ENCODE measurements at regions of chr7 and their contacts with region 1.

Region 1: GRCh38 chr7:94289071-94289470 is 105.6 kb upstream of the COL1A2 start:
- DNase-seq: peak; percentile 64
- H3K4me3 Mint-ChIP-seq: no peak overlapping the region
- H3K27ac Mint-ChIP-seq: no peak overlapping the region
- H3K4me1 Mint-ChIP-seq: no peaks in the 10 kb centered on the region
- H3K27me3 Mint-ChIP-seq: no peaks in the 10 kb centered on the region
- CTCF ChIP-seq: peak; percentile 62

Region 2: DNA sequence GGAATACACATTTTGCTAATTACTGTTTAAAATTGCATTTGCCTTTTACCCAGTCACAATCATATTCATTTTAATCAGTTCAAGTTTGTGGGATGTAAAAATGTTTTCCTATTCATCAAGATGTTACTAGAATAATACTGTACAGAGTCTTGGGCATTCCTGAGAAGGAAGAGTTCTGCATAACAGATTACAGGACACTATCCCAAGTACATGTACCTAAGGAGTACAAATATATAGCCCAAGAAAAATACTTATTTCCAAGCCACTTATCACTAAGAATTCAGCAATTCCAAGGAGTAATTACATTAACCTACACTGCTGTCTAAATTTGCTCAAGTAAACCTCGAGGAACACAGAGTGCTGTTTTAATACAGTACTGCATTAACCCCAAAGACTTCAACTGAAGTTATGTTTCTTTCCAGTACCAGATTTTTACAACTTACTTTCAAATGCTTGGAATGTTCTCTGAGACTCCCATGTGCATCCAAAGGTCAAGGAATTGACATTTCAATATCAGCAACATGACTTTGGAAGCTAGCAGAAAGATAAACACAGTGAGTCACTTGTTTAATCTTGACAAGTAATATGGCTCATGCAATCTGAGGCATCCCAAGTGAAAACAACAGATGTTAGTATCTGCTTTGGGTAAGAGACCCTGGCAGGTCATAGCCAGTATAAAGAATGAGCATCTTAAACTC is 159.5 kb before region 1 on chr7:
- CTCF ChIA-PET with region 1: no interaction called
- intact Hi-C with region 1: no loop called
- DNase-seq: no peak
- H3K4me3 Mint-ChIP-seq: no peak overlapping the region
- H3K27ac Mint-ChIP-seq: no peak overlapping the region
- H3K4me1 Mint-ChIP-seq: peaks cover 8% of the 10 kb centered on the region
- H3K27me3 Mint-ChIP-seq: no peaks in the 10 kb centered on the region
- CTCF ChIP-seq: no peak

Region 3: GRCh38 chr7:94338921-94339371 is 49.9 kb after region 1 on chr7:
- CTCF ChIA-PET with region 1: no interaction called
- intact Hi-C with region 1: no loop called
- DNase-seq: no peak
- H3K4me3 Mint-ChIP-seq: no peak overlapping the region
- H3K27ac Mint-ChIP-seq: no peak overlapping the region
- H3K4me1 Mint-ChIP-seq: no peaks in the 10 kb centered on the region
- H3K27me3 Mint-ChIP-seq: no peaks in the 10 kb centered on the region
- CTCF ChIP-seq: no peak

Region 4: DNA sequence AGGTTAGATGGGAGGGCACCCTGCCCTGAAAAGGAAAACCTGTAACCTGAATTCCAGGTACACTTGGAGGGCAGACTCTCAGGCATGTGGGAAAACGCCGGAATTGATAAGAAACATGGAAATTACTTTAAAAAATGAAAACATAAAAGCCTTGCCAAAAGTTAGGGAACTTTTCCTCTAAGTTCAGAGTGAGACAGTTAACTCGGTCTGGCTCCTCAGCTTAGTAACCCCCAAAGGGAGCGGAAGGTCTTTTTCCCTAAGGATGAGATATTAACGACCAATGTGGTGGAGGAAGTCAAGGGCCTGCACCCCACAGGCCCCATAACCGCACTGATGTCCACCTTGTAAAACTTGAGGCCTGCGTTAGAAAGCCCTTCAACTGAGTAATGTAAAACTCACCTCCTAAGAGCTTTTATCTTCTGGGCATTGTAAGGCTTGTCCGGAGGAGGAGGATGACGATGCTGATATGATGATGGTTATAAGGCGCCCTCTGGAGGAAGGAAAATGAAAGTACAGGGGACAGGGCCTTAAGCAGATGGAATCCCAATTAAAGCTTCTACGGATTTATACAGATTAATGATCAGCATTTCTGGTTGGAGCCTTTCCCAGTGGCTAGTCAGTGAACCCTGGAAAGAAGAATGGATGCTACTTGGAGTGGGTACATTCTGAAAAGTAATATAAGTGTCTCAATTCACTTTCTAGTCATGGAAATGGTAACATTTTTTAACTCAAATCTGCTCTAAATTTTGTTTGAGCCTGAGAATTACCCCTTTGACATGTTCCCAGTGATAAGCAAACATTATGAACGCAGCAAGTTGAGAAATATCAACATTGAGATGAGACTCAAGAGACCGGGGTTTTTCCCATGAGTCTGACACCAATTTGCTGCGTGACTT is 106.3 kb after region 1 on chr7:
- CTCF ChIA-PET with region 1: interaction called, 31 read pairs
- intact Hi-C with region 1: loop called (anchors 1 kb)
- DNase-seq: peak; percentile 41
- H3K4me3 Mint-ChIP-seq: no peak overlapping the region
- H3K27ac Mint-ChIP-seq: no peak overlapping the region
- H3K4me1 Mint-ChIP-seq: no peaks in the 10 kb centered on the region
- H3K27me3 Mint-ChIP-seq: no peaks in the 10 kb centered on the region
- CTCF ChIP-seq: no peak

Region 5: DNA sequence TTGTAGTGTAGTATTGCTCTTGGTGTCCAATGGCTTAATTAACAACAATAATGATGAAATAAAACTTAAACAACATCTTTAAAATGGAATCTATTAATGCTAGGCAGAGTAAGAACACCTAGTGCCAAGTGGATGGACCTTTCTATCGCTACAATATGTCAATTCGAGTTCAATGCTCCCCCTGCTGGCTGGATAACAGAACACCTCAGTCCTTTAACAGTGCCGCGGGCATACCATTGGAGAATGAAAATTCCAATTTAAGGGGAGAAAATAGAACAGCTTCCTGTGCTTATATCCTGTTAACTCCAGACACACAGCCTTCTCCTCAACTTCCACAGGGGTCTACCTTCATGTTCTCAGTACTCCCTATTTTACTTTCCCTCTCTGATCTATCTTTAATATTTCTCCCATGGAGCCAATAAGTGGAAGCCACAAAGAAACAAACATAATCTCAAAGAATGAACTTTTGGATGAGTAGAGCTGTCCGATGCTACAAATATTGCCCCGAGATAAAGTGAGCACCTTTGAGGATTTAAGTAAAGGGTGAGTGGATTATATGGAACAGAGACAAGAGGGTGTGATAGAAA is 147.0 kb after region 1 on chr7:
- CTCF ChIA-PET with region 1: interaction called, 5 read pairs
- intact Hi-C with region 1: loop called (anchors 1 kb)
- DNase-seq: peak; percentile 66
- H3K4me3 Mint-ChIP-seq: no peak overlapping the region
- H3K27ac Mint-ChIP-seq: no peak overlapping the region
- H3K4me1 Mint-ChIP-seq: no peaks in the 10 kb centered on the region
- H3K27me3 Mint-ChIP-seq: no peaks in the 10 kb centered on the region
- CTCF ChIP-seq: peak; percentile 70

Region 6: GRCh38 chr7:95045236-95045923 is 756.3 kb after region 1 on chr7:
- CTCF ChIA-PET with region 1: no interaction called
- intact Hi-C with region 1: loop called (anchors 5 kb)
- DNase-seq: peak; percentile 51
- H3K4me3 Mint-ChIP-seq: no peak overlapping the region
- H3K27ac Mint-ChIP-seq: no peak overlapping the region
- H3K4me1 Mint-ChIP-seq: no peaks in the 10 kb centered on the region
- H3K27me3 Mint-ChIP-seq: no peaks in the 10 kb centered on the region
- CTCF ChIP-seq: peak; percentile 31

Region 7: GRCh38 chr7:95246831-95247370 is 957.8 kb after region 1 on chr7:
- CTCF ChIA-PET with region 1: interaction called, 3 read pairs
- intact Hi-C with region 1: loop called (anchors 10 kb)
- DNase-seq: peak; percentile 43
- H3K4me3 Mint-ChIP-seq: no peak overlapping the region
- H3K27ac Mint-ChIP-seq: no peak overlapping the region
- H3K4me1 Mint-ChIP-seq: no peaks in the 10 kb centered on the region
- H3K27me3 Mint-ChIP-seq: no peaks in the 10 kb centered on the region
- CTCF ChIP-seq: peak; percentile 62

Measured in Calu3 (cell line).